ENCODE measurements at regions of chr14 and their contacts with region 1.

Region 1: DNA sequence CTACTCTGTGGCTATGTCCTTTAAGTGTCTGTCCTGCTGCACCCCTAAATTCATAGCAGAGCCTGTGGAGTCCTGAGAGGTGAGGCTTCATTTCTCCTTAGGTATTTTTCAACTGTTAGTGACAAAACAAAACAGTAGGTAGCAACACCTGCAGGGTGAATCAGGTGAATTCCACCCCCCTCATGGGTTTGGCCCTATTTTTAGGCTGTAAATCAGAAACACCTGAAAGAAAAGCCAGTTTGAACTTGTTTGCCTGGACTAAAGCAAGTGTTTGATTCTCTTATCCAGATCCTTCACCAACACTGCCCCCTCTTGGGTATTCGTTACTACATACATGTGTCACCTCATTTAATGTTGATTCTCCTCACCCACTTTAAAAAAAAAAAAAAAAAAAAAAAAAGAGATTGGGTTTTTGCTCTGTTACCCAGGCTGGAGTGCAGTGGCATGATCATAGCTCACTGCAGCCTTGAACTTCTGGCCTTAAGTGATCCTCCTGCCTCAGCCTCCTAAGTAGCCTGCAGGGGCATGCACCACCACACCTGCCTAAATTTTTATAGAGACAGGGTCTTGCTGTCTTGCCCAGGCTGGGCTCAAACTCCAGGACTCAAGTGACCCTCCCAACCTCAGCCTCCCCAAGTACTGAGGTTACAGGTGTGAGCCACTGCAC is 10.3 kb downstream of the TBPL2 start:
- DNase-seq: peak in 1 of 2 donors; percentile 68
- H3K4me3 ChIP-seq: no peak overlapping the region
- H3K27ac ChIP-seq: no peak overlapping the region
- H3K4me1 ChIP-seq: no peaks in the 10 kb centered on the region
- H3K27me3 ChIP-seq: no peaks in the 10 kb centered on the region
- CTCF ChIP-seq: peak; percentile 25 to 56 (median 29)

Region 2: GRCh38 chr14:55212634-55213033 is 217.5 kb before region 1 on chr14:
- intact Hi-C with region 1: loop called (anchors 2 kb)
- DNase-seq: no peak
- H3K4me3 ChIP-seq: no peak overlapping the region
- H3K27ac ChIP-seq: no peak overlapping the region
- H3K4me1 ChIP-seq: no peaks in the 10 kb centered on the region
- H3K27me3 ChIP-seq: no peaks in the 10 kb centered on the region
- CTCF ChIP-seq: no peak

Region 3: GRCh38 chr14:55245657-55246268 is 184.4 kb before region 1 on chr14:
- intact Hi-C with region 1: loop called (anchors 1 kb)
- DNase-seq: no peak
- H3K4me3 ChIP-seq: no peak overlapping the region
- H3K27ac ChIP-seq: peak overlapping the region in 1 of 2 donors; percentile 17
- H3K4me1 ChIP-seq: no peaks in the 10 kb centered on the region
- H3K27me3 ChIP-seq: no peaks in the 10 kb centered on the region
- CTCF ChIP-seq: peak; percentile 40 to 70 (median 52)